ENCODE measurements at regions of chr10 and their contacts with region 1.

Region 1: DNA sequence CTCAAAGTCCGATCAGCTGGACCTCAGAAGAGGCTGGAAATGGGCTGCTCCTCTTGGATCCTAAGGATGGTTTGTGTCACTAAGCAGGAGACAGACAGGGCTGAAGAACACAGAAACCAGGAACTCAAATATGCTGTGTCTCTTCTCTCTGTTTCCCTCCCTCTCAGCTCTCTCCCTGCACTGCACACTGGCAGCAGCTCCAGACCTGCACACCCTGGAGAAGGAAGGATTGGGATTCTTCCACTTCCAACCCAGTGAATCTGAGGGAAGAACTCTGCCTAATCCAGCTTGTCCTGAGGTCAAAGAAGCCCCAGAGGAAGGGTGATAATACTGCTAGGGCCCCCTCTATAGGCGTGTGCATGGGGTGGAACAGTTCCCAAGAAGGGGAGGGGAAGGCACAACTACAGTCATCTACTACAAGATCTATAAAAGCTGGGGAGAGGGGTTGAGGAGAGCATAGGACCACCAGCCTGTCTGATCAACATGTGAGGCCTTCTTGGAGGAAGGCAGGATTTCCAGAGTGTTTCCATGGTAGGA is 22.7 kb upstream of the ZCCHC24 start:
- DNase-seq: no peak
- H3K4me3 ChIP-seq: no peak overlapping the region
- H3K27me3 ChIP-seq: no peaks in the 10 kb centered on the region
- CTCF ChIP-seq: no peak

Region 2: GRCh38 chr10:79381804-79382221 is 86.3 kb before region 1 on chr10:
- CTCF ChIA-PET with region 1: interaction called, 18 read pairs
- POLR2A ChIA-PET with region 1: no interaction called
- DNase-seq: peak; percentile 50
- H3K4me3 ChIP-seq: no peak overlapping the region
- H3K27me3 ChIP-seq: no peaks in the 10 kb centered on the region
- CTCF ChIP-seq: no peak

Region 3: DNA sequence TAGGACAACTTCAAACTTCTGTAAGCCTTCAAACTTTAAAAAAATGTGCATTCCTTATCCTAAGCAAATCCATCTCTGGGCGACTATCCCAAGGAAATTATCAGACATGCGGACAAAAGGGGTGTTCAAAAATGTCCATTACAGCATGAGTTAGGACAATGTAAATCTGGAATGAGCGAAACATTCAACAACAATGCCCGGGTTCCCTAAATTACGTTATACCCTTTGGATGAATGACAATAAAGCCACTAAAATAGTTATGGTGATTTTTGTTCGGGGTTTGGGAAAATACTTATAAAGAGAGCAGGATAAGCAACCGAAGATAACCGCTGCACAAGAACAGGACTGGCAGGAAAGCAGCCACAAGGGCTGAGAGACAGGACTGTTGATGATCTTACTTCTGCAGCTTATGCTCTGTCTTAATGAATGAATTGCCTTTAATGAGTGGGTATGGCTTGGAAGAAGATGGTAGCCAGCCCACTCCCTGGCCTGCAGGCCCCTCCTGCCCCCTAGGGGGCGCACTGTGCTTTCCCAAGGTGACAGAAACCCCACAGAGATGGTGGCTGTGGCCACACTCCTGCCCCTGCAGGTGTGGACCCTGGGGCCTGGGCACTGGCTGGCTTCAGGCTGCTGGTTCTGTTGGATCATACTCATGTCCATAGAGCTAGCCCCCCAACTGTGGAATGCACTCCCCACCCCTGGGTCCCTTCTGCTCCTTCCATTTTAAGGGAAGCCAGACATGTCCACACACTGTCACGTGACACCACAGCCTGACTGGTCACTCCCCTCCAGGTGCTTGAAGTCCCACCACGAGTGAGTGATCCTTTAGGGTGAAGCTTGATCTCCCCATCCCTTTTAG is 67.7 kb before region 1 on chr10:
- CTCF ChIA-PET with region 1: interaction called, 15 read pairs
- POLR2A ChIA-PET with region 1: no interaction called
- DNase-seq: no peak
- H3K4me3 ChIP-seq: no peak overlapping the region; the same call in 1 of the 2 replicates
- H3K27me3 ChIP-seq: no peaks in the 10 kb centered on the region
- CTCF ChIP-seq: peak; percentile 79

Region 4: DNA sequence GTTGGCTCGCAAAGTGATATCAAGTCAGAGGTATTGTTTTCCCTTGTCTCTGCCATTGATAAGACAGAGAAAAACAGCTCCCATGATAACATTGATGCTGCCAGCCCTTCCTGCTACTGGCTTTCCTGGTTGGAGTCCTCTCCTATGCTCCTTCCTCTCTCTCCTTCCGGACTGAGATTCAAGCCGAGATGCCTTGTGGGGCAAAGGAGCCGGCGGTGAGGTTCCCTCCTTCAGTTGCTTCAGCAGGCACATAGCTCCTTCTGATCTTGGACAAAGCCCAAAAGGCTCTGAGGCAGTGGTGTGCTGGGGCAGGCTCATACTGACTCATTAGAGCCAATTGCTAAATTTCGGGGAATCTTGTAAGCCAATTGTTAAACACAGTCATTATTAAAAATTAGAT is 13.8 kb before region 1 on chr10:
- CTCF ChIA-PET with region 1: interaction called, 27 read pairs
- POLR2A ChIA-PET with region 1: no interaction called
- DNase-seq: peak; percentile 54
- H3K4me3 ChIP-seq: no peak overlapping the region
- H3K27me3 ChIP-seq: no peaks in the 10 kb centered on the region
- CTCF ChIP-seq: no peak

Region 5: DNA sequence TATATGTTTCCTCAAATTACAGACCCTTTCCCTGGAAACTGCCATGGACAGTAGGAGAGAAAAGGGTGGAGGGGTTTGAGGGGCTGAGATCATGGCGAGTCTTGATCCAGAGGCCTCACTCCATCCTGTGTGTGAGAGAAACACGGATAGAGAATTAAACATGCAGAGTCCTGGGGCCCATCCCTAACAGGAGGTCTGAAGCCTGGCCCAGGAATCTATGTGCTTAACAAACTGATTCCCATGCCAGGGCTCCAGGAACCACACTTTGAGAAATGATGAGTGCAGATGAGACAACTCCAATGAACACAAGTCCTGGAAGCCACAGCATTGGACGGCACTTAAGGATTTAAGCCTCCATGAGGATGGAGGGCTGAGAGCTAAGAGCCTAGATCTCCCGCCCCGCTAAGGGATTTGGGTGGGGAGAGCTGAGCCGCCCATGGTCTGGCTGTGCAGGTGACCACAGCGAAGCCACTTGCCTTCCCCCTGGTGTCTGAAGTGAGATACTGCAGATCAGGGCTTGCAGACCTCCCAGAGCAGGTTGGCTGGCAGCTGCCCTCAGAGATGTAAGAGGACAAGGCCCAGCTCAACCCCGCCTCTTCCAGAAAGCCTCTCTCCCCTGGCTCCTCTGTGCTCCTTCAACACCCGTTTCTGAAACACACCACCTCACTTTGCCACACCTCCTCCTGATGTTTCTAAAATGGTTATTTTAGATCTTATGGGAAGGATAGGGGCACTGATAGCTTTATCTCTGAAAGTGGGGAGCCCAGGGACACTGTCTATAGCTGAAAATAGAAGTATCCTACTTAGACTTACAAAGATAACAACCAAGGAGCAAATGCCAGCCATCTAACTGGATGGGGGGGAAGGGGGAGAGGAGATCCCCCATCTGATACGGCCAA is 19.5 kb after region 1 on chr10:
- CTCF ChIA-PET with region 1: interaction called, 28 read pairs
- POLR2A ChIA-PET with region 1: no interaction called
- DNase-seq: no peak
- H3K4me3 ChIP-seq: no peak overlapping the region
- H3K27me3 ChIP-seq: no peaks in the 10 kb centered on the region
- CTCF ChIP-seq: peak; percentile 65

Measured in BJ (cell line).